ENCODE measurements at regions of chr9 and their contacts with region 1.

Region 1: DNA sequence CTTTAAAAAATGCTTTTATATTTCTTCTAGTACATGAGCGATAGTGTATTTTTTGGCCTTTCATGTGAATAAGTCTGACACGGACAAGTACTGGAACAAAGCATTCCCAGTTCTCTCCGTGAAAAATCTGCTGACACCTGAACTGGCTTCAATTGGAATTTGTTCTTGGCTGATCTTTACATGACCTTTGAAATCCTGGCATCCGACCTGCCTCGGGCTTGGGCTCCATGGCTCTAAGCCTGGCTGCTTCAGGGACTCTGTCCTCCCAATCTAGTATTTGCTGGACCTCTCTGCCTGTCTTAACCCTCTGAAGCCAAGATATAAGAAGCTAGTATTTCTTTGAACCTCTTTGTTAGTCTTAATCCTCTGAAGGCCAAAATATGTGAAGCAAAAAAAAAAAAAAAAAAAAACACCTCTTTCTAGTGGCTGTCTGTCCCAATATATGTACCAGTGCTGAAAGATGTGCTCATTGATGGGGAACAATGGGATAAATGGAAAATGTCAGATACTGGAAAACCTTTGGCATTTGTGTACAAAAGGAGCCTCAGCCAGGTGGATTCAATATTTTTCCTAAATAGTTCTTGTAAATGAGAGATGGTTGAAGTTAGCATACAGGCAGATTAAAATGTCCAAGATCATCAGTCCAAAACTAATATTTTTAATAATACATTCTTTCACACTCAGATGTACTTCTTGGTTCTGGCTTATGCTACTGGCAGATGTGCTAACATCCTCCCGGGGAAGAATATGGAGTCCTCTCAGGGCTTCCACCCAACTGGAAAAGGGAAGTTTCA is 470.6 kb downstream of the TUSC1 start:
- DNase-seq: no peak
- ATAC-seq: no peak
- H3K4me3 ChIP-seq: no peak overlapping the region
- H3K4me3 Mint-ChIP-seq: no peak overlapping the region
- H3K27ac ChIP-seq: no peak overlapping the region
- H3K27ac Mint-ChIP-seq: no peak overlapping the region
- H3K4me1 ChIP-seq: no peaks in the 10 kb centered on the region
- H3K4me1 Mint-ChIP-seq: no peaks in the 10 kb centered on the region
- H3K27me3 ChIP-seq: no peaks in the 10 kb centered on the region
- H3K27me3 Mint-ChIP-seq: no peaks in the 10 kb centered on the region
- CTCF ChIP-seq: no peak

Region 2: GRCh38 chr9:23587433-23587832 is 1620.2 kb before region 1 on chr9:
- CTCF ChIA-PET with region 1: no interaction called
- POLR2A ChIA-PET with region 1: no interaction called
- intact Hi-C with region 1: no loop called
- DNase-seq: no peak
- ATAC-seq: no peak
- H3K4me3 ChIP-seq: no peak overlapping the region
- H3K4me3 Mint-ChIP-seq: no peak overlapping the region
- H3K27ac ChIP-seq: no peak overlapping the region
- H3K27ac Mint-ChIP-seq: no peak overlapping the region
- H3K4me1 ChIP-seq: no peaks in the 10 kb centered on the region
- H3K4me1 Mint-ChIP-seq: peaks cover 15% of the 10 kb centered on the region
- H3K27me3 ChIP-seq: no peaks in the 10 kb centered on the region
- H3K27me3 Mint-ChIP-seq: no peaks in the 10 kb centered on the region
- CTCF ChIP-seq: no peak

Region 3: DNA sequence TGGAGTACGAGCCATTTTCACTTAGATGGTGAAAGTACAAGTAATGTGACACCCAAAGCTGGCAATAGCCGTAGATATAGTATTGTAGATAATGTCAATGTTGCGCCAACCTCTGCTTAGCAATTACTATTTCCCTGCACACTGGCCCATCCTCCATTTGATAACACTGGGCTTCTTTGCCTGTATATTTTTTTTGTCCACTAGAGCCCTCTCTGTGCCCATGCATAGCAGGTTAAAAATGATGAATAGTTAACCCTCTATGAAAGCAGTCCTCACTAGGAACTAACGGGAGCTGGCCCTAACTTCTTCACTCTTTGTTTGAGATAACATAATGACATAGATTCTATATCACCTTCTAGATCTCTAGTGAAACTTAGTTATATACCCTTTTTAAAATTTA is 53.8 kb after region 1 on chr9:
- CTCF ChIA-PET with region 1: no interaction called
- POLR2A ChIA-PET with region 1: no interaction called
- intact Hi-C with region 1: loop called in 1 of 2 experiments (anchors 10 kb)
- DNase-seq: no peak
- ATAC-seq: no peak
- H3K4me3 ChIP-seq: no peak overlapping the region
- H3K4me3 Mint-ChIP-seq: no peak overlapping the region
- H3K27ac ChIP-seq: no peak overlapping the region
- H3K27ac Mint-ChIP-seq: no peak overlapping the region
- H3K4me1 ChIP-seq: no peaks in the 10 kb centered on the region
- H3K4me1 Mint-ChIP-seq: no peaks in the 10 kb centered on the region
- H3K27me3 ChIP-seq: no peaks in the 10 kb centered on the region
- H3K27me3 Mint-ChIP-seq: no peaks in the 10 kb centered on the region
- CTCF ChIP-seq: no peak